ENCODE measurements at regions of chr6 and their contacts with region 1.

Region 1: GRCh38 chr6:83505356-83505755 is 7.0 kb upstream of the PRSS35 start:
- DNase-seq: peak in 1 of 2 donors; percentile 19
- H3K4me3 ChIP-seq: no peak overlapping the region
- CTCF ChIP-seq: no peak
- POLR2A ChIP-seq: no peak

Region 2: DNA sequence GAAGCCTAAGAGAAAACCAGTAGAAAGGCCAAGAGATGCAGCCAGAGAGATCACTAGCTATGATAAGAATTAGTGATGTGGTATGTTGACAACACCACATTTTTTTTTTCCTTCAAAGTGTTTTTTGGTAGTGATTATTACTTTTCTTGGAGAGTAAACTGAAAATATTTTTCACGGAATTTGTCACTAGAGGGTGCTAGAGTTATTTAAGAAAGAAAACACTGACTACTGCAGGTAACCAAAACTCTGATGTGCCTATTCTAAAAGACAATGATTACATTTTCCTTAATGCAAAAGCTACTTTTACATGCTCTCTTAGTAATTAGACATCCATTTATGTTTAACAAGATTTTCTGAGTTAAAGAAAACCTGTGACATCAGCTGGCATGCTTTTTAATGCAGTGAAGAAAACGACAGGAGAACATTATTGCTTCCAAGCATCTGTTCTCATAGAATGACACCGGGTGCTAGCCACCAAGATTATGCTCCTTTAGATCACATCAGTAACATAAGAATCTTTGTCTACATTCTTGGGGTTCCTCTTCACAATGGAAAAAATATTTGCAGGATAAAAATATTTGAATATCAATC is 283.4 kb before region 1 on chr6:
- intact Hi-C with region 1: loop called (anchors 10 kb)
- DNase-seq: no peak
- H3K4me3 ChIP-seq: no peak overlapping the region
- CTCF ChIP-seq: no peak
- POLR2A ChIP-seq: no peak

Region 3: GRCh38 chr6:84943905-84944304 is 1438.5 kb after region 1 on chr6:
- intact Hi-C with region 1: no loop called
- DNase-seq: no peak
- H3K4me3 ChIP-seq: no peak overlapping the region
- CTCF ChIP-seq: no peak
- POLR2A ChIP-seq: no peak

Measured in lower leg skin (tissue), 4 donors.